Head of caudate nucleus (tissue), 42 donors: ENCODE measurements at regions of chr1 and their contacts with region 1.

Region 1: DNA sequence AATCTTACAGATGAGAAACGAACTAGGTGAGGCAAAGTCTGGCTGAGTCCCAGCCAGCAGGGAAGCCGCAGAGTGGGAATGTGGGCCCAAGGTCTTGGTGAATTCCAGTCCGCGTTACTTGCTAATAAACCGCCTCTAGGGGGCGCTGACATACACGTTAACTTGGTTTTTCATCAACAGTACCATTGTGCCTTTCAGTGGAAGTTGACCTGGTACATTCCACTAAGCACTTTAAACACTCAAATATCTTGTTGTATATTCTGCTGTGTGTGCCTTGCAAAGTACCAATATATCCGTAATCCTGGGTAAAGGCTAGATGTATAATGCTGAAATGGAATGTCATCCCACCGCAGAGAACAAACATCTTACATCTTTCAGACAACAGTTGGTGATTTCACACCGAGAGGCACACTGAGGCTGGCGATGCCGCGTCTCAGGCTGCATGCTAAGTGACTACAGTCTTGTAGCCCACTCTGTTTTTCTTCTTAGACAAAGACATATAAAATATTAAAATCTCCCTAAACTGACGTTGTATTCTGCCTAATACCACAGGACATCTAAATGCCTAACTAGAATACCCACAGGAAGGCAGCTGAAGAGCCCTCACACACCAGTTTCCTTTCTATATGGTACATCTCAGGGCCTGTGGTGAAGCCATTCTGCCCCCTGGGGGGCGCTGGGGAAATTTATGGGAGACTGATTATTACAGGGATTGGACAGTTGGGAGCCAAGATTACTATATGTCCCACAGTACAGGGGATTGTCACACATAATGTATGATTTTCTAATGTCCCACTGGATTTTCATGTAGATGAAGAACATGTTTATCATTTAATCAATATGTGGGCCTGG is 49.2 kb upstream of the C1orf198 start:
- DNase-seq: peak; percentile 40 to 92 (median 78)

Region 2: DNA sequence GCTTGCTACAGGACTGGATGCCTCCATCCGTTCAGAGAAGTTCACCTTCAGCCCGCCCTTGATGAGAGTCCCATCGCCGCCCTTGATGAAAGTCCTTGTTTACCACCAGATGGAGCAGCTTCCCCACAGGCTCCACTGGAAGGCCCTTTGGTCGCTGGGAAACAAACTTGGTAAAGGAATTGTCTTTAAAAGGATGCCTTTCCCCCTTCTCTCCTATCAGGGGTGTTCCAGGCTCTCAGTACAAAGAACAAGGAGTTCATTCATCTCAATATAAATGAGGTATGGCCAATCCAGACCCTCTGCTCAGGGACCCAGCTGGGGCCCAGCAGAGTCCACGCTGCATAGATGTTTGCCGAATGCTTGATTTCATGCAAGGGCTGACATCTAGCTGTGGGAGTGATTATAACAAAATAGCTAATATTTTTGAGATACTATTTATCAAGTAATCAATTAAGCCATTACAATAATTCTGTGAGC is 119.5 kb before region 1 on chr1:
- intact Hi-C with region 1: loop called (anchors 2 kb)
- DNase-seq: peak; percentile 50 to 92 (median 78)

Region 3: DNA sequence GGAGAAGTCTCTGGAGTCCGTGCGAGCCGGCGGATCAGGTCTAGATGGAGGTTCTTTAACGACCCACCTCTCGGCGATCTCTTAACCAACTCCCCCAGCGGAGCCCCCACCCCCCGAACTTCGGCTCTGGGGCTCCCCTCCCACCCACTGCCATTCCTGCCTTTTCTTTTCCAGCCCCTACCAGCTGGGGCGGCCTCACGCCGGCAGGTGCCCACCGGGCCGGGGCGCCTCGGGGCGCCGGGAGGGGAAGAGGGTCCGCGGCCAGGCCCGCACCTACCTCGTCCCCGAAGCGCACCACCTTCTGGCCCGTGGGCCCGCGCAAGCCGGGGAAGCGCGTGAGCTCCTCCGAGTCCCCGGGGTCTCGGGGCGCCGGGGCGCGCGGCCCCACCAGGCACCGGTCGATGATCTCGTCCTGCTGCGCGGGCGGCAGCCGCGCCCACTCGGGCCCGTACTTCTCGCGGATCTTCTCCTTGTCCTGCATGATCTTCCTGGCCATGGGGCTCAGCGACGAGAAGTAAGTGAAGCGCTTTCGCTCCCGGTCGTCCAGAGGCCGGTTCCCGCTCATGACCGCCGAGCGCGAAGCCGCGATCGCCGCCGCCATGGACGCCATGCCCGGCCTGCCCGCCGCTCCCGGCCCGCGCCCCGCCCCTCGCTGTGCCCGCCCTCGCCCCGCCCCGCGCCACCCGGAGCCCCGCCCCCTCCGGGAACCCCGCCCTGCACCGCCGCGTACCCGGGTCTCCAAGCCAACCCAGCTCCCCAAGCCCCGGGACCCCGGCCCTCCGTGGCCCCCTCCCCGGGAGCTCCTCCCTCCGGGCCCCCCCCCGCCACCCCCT is 49.4 kb before region 1 on chr1 and contains the start of gene C1orf198:
- intact Hi-C with region 1: loop called (anchors 5 kb)
- DNase-seq: peak; percentile 55 to 94 (median 88)

Region 4: GRCh38 chr1:230978491-230979388 is 61.2 kb after region 1 on chr1 and contains the starts of genes ARV1 and TTC13:
- intact Hi-C with region 1: no loop called
- DNase-seq: peak; percentile 96 to 100 (median 99)